ENCODE measurements at regions of chr1 and their contacts with region 1.

Region 1: DNA sequence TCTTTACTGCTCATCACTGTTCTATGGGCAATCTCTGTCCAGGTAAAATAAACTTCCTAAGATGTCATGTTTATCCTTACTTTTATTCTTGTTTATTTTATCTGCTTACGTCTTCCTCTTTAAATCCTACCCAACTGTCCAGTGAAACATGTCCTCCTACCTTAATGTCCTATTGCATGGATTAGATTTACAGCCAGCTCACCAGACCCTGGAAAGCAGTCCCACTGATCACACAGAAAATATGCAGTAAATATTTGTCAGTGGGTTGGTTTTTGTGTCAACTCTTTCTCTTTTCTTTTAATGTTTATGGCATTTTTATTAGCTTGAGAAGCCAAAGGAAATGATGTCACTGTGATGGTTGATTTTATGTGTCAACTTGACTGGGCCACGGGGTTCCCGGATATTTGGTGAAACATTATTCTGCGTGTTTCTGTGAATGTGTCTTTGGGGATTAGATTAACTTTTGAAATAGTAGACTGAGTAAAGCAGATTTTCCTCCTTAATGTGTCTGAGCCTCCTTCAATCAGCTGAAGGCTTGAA is 258.3 kb downstream of the SRGAP2C start:
- DNase-seq: no peak
- ATAC-seq: no peak
- H3K4me3 Mint-ChIP-seq: no peak overlapping the region
- H3K27ac Mint-ChIP-seq: no peak overlapping the region
- H3K4me1 Mint-ChIP-seq: peaks cover 2% of the 10 kb centered on the region
- H3K27me3 Mint-ChIP-seq: no peaks in the 10 kb centered on the region

Region 2: GRCh38 chr1:121408354-121408753 is 34.7 kb before region 1 on chr1:
- CTCF ChIA-PET with region 1: no interaction called
- POLR2A ChIA-PET with region 1: no interaction called
- intact Hi-C with region 1: no loop called
- DNase-seq: no peak
- ATAC-seq: no peak
- H3K4me3 Mint-ChIP-seq: no peak overlapping the region
- H3K27ac Mint-ChIP-seq: no peak overlapping the region
- H3K4me1 Mint-ChIP-seq: no peaks in the 10 kb centered on the region
- H3K27me3 Mint-ChIP-seq: no peaks in the 10 kb centered on the region

Region 3: DNA sequence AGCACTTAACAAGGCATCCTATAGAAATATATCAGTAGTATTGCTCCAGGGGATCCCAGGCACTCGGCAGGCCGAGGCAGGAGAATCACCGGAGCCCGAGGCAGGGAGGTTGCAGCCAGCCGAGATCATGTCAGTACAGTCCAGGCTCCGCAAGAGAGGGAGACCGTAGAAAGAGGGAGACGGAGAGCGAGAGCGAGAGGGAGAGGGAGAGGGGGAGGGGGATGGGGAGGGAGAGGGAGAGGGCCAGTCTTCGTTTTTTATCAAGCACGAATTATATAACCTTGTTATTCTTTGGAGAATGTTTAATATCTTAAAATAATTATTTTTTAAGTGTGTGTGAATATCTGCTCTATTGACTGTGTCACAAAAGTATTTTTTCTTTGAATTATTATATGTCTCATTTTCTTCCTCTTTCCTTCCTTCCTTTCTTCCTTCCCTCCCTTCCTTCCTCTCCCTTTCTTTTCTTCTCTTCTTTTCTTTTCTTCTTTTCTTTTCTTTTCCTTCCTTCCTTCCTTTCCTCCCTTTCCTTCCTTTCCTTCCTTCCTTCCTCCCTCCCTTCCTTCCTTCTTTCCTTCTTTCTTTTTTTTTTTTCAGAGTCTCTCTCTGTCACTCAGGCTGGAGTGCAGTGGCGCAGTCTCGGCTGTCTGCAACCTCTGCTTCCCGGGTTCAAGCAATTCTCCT is 24.6 kb before region 1 on chr1:
- CTCF ChIA-PET with region 1: no interaction called
- POLR2A ChIA-PET with region 1: no interaction called
- intact Hi-C with region 1: no loop called
- DNase-seq: no peak
- ATAC-seq: no peak
- H3K4me3 Mint-ChIP-seq: no peak overlapping the region
- H3K27ac Mint-ChIP-seq: no peak overlapping the region
- H3K4me1 Mint-ChIP-seq: peaks cover 3% of the 10 kb centered on the region
- H3K27me3 Mint-ChIP-seq: no peaks in the 10 kb centered on the region

Region 4: DNA sequence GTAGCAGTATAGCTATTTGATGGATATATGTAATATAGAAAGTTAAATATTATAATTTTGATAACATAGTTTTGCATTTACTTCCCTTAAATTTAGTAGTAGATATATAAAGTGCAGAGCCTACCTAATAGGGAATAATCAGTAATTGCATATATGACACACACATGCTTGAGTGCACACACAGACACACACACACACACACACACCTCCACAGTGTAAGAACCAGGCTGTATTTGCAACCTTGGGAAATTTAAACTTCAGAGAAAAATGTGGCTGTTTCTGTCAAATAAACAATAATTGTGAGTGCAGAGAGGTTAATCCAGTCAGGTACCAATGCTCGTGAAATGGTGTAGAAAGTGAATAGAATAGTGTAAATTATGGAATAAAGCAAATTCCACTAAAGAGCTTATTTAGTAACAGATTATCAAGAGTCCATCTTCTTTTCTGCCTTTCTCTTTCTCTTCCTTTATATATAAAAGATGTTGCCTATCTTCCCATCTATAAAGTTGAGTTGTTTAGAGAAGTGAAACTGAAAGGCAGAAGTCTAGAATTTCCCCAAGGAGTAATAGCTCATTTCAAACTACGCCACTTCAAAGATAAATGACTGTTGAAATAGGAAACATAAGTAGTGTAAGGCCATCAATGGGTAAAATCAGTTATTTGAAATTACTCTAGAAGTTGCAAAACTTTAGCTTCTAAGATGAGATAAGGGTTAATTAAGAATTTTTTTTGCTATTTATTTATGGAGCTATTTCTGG is 15.4 kb after region 1 on chr1:
- CTCF ChIA-PET with region 1: interaction called, 6 read pairs
- POLR2A ChIA-PET with region 1: no interaction called
- intact Hi-C with region 1: loop called in 1 of 2 experiments (anchors 2 kb)
- DNase-seq: no peak
- ATAC-seq: peak; percentile 95
- H3K4me3 Mint-ChIP-seq: peak overlapping the region; percentile 21
- H3K27ac Mint-ChIP-seq: no peak overlapping the region
- H3K4me1 Mint-ChIP-seq: peaks cover 12% of the 10 kb centered on the region
- H3K27me3 Mint-ChIP-seq: peaks cover 9% of the 10 kb centered on the region

Region 5: DNA sequence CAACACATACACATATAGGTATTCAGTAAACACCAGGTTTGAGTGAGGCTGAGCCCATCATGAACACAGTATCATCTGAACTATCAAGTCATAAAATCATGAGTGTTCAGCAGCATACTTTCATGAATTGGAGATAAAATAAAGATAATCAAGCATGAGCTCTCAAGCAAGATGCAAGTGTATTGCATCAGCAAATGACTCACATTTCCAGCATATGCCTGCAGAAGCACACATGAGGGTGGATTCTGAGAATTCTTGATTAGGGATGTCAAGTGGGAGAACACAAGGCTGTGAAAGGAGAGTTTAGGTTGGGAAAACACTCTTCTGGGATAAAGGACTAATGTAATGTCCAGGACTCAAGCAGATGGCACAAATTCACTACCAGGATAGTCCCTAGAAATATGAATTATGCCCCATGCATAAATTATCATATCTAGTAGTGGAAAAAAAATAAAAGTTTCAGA is 40.9 kb after region 1 on chr1:
- CTCF ChIA-PET with region 1: interaction called, 3 read pairs
- POLR2A ChIA-PET with region 1: no interaction called
- intact Hi-C with region 1: loop called in 1 of 2 experiments (anchors 5 kb)
- DNase-seq: peak; percentile 22
- ATAC-seq: peak; percentile 82
- H3K4me3 Mint-ChIP-seq: no peak overlapping the region
- H3K27ac Mint-ChIP-seq: peak overlapping the region; percentile 80
- H3K4me1 Mint-ChIP-seq: peaks cover 19% of the 10 kb centered on the region
- H3K27me3 Mint-ChIP-seq: no peaks in the 10 kb centered on the region

Region 6: GRCh38 chr1:121546830-121547591 is 103.9 kb after region 1 on chr1:
- CTCF ChIA-PET with region 1: no interaction called
- POLR2A ChIA-PET with region 1: no interaction called
- intact Hi-C with region 1: no loop called
- DNase-seq: no peak
- ATAC-seq: no peak
- H3K4me3 Mint-ChIP-seq: no peak overlapping the region
- H3K27ac Mint-ChIP-seq: no peak overlapping the region
- H3K4me1 Mint-ChIP-seq: peaks cover 21% of the 10 kb centered on the region
- H3K27me3 Mint-ChIP-seq: no peaks in the 10 kb centered on the region

Region 7: DNA sequence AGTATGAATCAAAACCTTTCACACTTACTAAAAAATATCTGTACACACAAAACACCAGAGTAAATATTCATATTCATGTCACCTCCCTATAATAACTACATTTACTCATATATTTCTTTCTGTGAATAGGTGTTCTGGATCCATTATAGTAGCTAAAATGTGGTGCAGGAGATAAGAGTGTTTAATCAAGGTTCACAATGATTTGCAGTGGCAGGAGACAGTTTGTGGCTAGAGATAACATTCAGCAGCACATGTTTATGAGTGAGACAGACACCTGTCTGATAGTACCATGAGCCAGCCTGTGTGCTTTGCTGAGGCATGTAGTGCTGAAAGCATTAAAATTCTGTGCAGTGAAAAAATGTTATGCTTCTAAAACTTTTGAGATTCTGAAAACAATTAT is 152.0 kb after region 1 on chr1:
- CTCF ChIA-PET with region 1: no interaction called
- POLR2A ChIA-PET with region 1: no interaction called
- intact Hi-C with region 1: no loop called
- DNase-seq: no peak
- ATAC-seq: peak; percentile 30
- H3K4me3 Mint-ChIP-seq: no peak overlapping the region
- H3K27ac Mint-ChIP-seq: no peak overlapping the region
- H3K4me1 Mint-ChIP-seq: peaks cover 8% of the 10 kb centered on the region
- H3K27me3 Mint-ChIP-seq: no peaks in the 10 kb centered on the region

Measured in activated CD4-positive, alpha-beta T cell treated with anti-CD3 and anti-CD28 coated beads for 36 hours (primary cell).